Common myeloid progenitor, CD34-positive (primary cell): ENCODE measurements at regions of chr11 and their contacts with region 1.

Region 1: DNA sequence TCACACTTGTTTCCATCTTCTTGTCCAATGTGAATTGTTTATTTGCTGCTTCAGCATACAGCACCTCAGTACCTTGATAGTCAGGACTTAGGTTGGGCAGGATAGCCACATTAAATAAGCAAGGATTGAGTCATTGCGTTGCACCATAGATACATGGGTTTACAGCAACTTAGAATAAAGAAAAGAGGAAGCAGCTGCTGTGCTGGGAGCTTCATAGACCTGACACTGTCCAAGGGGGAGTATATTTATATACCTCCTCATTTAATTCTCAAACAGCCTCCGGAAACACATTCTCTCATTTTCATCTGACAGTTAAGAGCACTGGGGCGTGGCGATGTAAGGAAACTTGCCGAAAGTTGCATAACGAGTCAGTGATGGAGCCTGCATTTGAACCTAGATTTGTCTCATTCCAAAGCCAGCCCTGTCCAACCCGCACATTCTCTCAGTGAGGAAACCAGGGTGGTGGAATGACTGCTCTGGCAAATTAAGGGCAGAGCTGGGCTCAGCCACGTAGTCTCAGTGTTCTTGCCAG is 42.2 kb downstream of the UBASH3B start:
- DNase-seq: peak; percentile 85 to 99 (median 98)
- H3K4me3 ChIP-seq: peak overlapping the region in 4 of 7 experiments; percentile 17 to 55 (median 38)
- H3K27ac ChIP-seq: peak overlapping the region in 1 of 2 experiments; percentile 71
- H3K4me1 ChIP-seq: peaks cover 27 to 67% (median 58%) of the 10 kb centered on the region in 4 experiments
- H3K27me3 ChIP-seq: no peaks in the 10 kb centered on the region

Region 2: GRCh38 chr11:122584670-122585069 is 113.0 kb before region 1 on chr11:
- CTCF ChIA-PET with region 1: no interaction called
- POLR2A ChIA-PET with region 1: no interaction called
- DNase-seq: no peak
- H3K4me3 ChIP-seq: no peak overlapping the region
- H3K27ac ChIP-seq: no peak overlapping the region
- H3K4me1 ChIP-seq: peaks cover 2 to 11% (median 8%) of the 10 kb centered on the region in 4 experiments
- H3K27me3 ChIP-seq: no peaks in the 10 kb centered on the region

Region 3: DNA sequence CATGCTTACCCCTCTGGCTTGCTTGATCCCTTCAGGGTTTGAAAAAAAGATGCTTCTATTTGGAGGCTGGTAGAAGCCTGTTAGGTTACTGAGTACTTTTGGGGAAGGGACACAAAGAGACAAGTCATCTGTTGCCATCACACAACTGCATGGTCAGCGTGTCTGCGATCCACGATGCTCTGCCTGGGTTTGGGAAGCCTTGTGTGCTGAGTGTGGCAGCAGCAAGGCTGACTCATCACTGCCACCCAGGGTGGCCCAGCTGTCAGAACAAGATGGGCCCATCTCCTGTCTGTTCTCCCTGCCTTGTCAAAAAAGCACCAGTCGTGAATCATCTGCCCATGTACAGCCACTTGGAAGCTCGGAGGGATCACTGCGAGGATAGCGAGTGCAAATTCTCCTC is 16.0 kb before region 1 on chr11:
- CTCF ChIA-PET with region 1: interaction called, 12 read pairs
- POLR2A ChIA-PET with region 1: no interaction called
- DNase-seq: peak in 2 of 3 donors; percentile 59 to 67
- H3K4me3 ChIP-seq: no peak overlapping the region
- H3K27ac ChIP-seq: no peak overlapping the region
- H3K4me1 ChIP-seq: peaks cover 0 to 32% (median 12%) of the 10 kb centered on the region in 4 experiments
- H3K27me3 ChIP-seq: no peaks in the 10 kb centered on the region